Activated T-helper 2 cell treated with anti-CD3 and anti-CD28 coated beads, Interferon-gamma antibody, Interleukin-2, Interleukin-4, amounts not matched to agents 10 μg/mL and 5 μg/mL and 100 μg/mL, durations not matched to agents 14 hours and 24 hours and 36 hours (primary cell): ENCODE measurements at regions of chr18 and their contacts with region 1.

Region 1: DNA sequence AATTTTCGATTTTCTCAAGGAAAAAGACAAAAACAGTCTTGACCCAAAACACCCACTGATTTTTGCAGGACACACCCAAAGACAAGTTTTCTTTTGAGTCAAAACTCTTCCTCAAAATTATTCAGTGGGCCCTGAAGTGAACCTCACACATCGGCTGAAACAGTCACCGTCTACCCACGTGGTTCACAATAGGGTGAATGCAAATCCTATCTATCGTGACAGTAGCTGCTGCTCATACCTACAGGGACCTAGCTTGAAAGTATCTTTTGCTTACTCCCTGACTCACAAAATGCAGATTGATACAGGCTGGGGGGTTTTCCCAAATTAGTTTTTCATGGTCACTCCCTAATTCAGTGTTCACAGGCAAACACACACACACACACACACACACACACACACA is 10.7 kb upstream of the CD226 start:
- DNase-seq: no peak
- H3K4me3 Mint-ChIP-seq: no peak overlapping the region
- H3K27ac Mint-ChIP-seq: no peak overlapping the region
- H3K4me1 Mint-ChIP-seq: peaks cover 23% of the 10 kb centered on the region
- H3K27me3 Mint-ChIP-seq: no peaks in the 10 kb centered on the region

Region 2: DNA sequence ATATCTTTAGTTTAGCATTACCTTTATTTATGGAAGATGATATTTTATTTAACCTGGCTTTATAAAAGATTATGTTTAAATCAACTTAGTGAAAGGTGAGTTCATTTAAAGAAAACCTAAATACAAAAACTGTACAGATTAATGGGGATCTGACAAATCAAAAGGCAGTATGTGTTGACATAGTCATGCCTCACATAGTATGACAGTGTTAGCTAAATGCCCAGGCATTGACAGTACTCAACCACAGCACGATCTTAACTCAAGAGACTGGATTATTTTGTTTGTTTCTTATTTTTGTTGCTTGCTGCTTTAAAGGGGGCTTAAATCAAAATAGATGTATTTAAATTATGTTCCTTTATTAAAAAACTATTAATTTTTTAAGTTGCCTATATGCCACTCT is 549.9 kb before region 1 on chr18:
- intact Hi-C with region 1: no loop called
- DNase-seq: no peak
- H3K4me3 Mint-ChIP-seq: no peak overlapping the region
- H3K27ac Mint-ChIP-seq: no peak overlapping the region
- H3K4me1 Mint-ChIP-seq: no peaks in the 10 kb centered on the region
- H3K27me3 Mint-ChIP-seq: peaks cover 13% of the 10 kb centered on the region

Region 3: GRCh38 chr18:69865776-69866175 is 92.6 kb before region 1 on chr18:
- intact Hi-C with region 1: no loop called
- DNase-seq: no peak
- H3K4me3 Mint-ChIP-seq: no peak overlapping the region
- H3K27ac Mint-ChIP-seq: no peak overlapping the region
- H3K4me1 Mint-ChIP-seq: peaks cover 9% of the 10 kb centered on the region
- H3K27me3 Mint-ChIP-seq: no peaks in the 10 kb centered on the region

Region 4: DNA sequence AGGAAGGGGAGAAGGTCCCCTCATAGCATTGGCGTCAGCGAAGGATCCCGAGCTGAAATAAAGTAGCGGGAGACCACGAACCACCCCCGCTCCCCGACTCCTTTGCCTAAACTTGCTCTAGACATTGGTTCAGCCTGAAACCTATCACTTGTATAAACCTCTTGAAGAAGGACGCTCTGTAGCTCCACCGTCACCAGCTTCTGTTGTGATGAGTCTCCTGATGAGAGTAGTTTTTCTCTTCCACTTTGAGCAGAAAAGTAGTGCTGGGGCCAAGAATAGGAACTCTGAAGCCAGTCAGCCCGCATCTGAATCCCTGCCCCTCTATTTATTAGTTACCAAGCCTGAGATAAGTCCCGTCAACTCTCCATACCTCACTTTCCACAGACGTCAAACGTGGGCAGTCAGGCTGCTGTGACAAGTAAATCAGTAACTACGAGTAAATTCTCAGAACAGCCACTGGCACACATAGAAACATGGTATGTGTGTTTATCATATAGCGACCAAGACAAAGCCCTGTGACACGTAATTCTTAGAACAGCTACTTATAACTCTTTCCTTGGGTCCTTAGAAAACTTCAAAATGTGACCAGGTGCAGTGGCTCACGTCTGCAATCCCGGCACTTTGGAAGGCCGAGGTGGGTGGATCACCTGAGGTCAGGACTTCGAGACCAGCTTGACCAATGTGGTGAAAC is 72.4 kb before region 1 on chr18:
- intact Hi-C with region 1: loop called (anchors 1 kb)
- DNase-seq: peak; percentile 36
- H3K4me3 Mint-ChIP-seq: peak overlapping the region; percentile 76
- H3K27ac Mint-ChIP-seq: peak overlapping the region; percentile 100
- H3K4me1 Mint-ChIP-seq: peaks cover 75% of the 10 kb centered on the region
- H3K27me3 Mint-ChIP-seq: no peaks in the 10 kb centered on the region

Region 5: GRCh38 chr18:69935319-69936190 is 22.9 kb before region 1 on chr18:
- intact Hi-C with region 1: loop called (anchors 1 kb)
- DNase-seq: peak; percentile 71
- H3K4me3 Mint-ChIP-seq: no peak overlapping the region
- H3K27ac Mint-ChIP-seq: no peak overlapping the region
- H3K4me1 Mint-ChIP-seq: peaks cover 28% of the 10 kb centered on the region
- H3K27me3 Mint-ChIP-seq: no peaks in the 10 kb centered on the region

Region 6: DNA sequence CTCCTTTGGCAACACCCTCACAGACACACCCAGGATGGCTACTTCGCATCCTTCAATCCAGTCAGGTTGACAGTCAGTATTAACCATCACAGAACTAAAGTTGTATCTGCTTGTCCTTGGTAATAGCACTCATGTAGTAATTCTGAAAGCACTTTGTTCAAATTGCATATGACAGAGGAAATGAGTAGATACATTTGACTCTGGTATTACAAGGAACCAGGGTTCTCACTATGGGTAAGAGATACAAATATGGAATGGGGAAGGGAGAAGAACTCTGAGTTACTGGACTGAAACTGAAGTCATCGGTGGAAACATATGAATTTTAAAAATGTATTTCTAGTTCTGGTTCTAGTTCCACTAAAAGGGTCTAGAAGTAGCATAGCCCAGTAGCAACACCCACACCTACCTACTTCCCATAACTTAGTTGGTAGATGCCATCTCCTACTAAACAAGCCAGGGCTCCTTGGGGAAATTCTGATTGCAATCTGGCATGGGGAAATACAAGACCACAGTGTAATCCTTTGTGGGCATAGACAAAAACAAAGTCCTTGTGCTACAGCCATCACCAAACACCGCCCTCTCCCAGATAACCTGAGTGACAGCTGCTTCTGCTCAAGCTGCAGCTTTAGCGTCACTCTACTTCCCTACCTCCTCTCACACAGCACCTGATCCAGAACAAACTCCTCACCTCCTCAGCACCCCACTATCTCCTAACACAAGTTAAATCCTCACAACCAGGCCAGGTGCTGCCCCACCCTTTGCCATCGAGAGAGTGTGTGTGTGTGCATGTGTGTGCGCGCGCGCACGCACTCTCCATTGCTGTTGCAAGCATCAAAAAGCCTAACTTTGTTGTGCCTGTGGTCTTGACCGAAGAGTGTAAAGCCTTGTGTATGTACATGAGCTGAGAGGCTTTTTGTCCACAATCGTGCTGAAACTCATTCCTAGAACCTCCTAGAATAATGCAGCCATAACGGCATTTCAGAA is 20.6 kb after region 1 on chr18:
- intact Hi-C with region 1: loop called (anchors 1 kb)
- DNase-seq: no peak
- H3K4me3 Mint-ChIP-seq: no peak overlapping the region
- H3K27ac Mint-ChIP-seq: peak overlapping the region; percentile 1
- H3K4me1 Mint-ChIP-seq: peaks cover 36% of the 10 kb centered on the region
- H3K27me3 Mint-ChIP-seq: no peaks in the 10 kb centered on the region

Region 7: DNA sequence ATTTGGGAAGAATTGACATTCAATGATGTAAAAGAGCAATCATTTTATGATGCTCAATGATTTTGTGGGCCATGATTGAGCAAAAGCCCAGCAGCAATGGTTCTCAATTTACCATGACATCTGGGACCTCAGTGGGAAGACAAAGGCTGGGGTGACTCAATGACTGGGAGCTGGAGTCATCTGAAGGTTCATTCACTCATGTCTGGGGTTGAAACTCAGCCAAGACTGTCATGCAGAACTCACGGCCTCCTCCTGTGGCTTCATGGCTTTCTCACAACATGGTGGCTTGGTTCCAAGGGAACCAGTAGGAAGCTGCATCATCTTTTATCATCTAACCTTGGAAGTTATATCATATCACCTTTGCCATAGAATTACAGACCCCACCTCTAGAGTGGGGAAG is 34.4 kb after region 1 on chr18:
- intact Hi-C with region 1: no loop called
- DNase-seq: no peak
- H3K4me3 Mint-ChIP-seq: no peak overlapping the region
- H3K27ac Mint-ChIP-seq: no peak overlapping the region
- H3K4me1 Mint-ChIP-seq: peaks cover 23% of the 10 kb centered on the region
- H3K27me3 Mint-ChIP-seq: no peaks in the 10 kb centered on the region

Region 8: DNA sequence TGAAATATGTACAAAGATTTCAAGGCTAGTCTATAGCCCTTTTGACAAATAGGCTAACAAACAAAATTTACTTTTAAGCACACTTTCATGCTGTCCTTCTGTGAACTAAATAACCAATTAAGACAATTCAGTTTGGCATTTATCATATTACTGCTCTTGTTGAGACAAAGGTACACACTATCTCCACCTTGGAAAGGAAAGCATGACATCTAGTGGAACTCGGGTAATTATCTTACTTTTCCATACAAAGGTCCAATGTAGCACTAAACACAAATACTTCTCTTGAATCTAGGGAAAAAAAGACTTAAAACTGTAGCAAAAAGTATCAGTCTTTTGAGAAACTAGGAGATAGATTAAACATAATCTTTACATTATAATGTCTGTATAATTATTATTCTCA is 114.3 kb after region 1 on chr18:
- intact Hi-C with region 1: loop called (anchors 5 kb)
- DNase-seq: no peak
- H3K4me3 Mint-ChIP-seq: no peak overlapping the region
- H3K27ac Mint-ChIP-seq: no peak overlapping the region
- H3K4me1 Mint-ChIP-seq: no peaks in the 10 kb centered on the region
- H3K27me3 Mint-ChIP-seq: no peaks in the 10 kb centered on the region

Region 9: GRCh38 chr18:70205421-70206397 is 247.3 kb after region 1 on chr18 and contains the start of gene RTTN:
- intact Hi-C with region 1: loop called (anchors 5 kb)
- DNase-seq: peak; percentile 91
- H3K4me3 Mint-ChIP-seq: peak within 1 kb of the TSS; percentile 93
- H3K27ac Mint-ChIP-seq: peak within 1 kb of the TSS; percentile 98
- H3K4me1 Mint-ChIP-seq: peaks cover 22% of the 10 kb centered on the region
- H3K27me3 Mint-ChIP-seq: peaks cover 15% of the 10 kb centered on the region
- total RNA-seq, gene RTTN: 21.0 and 25.2 TPM in 2 replicates